ENCODE measurements at regions of chr20 and their contacts with region 1.

Region 1: DNA sequence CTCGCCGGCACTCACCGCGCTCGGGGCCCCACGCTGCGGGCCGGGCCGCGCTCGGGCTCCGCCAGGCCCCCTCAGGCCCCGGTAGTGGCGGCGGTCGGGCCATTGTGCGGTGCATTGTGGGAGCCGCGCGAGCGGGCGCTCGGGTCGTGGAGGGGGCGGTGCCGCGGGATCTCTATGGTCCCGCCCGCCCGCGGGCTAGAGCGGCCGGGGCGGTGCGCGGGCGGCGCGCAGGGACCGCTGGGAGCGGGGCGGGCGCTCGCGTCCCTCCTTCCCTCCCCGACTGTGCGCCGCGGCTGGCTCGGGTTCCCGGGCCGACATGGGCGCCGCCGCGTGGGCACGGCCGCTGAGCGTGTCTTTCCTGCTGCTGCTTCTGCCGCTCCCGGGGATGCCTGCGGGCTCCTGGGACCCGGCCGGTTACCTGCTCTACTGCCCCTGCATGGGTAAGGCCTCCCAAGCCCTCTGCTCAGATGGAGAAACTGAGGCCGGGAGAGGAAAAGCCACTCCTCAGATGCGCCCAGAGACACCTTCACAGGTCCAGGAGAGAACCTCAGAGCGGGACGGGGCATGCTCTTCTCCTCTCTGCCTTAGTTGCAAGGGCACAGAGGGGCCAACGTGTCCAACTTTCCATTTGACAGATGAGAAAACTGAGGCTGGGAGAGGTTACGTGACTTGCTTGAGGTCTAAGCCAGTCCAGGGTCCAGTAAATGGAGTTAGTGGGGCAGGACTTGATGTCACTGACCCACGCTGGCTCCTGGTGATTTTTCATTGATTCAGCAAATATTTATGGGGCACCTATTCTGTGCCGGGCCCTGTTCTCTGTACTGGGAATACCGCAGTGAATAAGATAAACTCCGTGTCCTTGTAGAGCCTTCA is at the starts of genes PLAGL2 and POFUT1:
- DNase-seq: peak; percentile 86
- H3K4me3 Mint-ChIP-seq: peak within 1 kb of the TSS; percentile 100
- H3K27ac Mint-ChIP-seq: peak within 1 kb of the TSS; percentile 100
- H3K4me1 Mint-ChIP-seq: peaks cover 64% of the 10 kb centered on the region
- H3K27me3 Mint-ChIP-seq: no peaks in the 10 kb centered on the region
- CTCF ChIP-seq: no peak
- total RNA-seq, gene PLAGL2: 18.4 and 18.6 TPM in 2 replicates
- total RNA-seq, gene POFUT1: 43.1 and 43.9 TPM in 2 replicates

Region 2: DNA sequence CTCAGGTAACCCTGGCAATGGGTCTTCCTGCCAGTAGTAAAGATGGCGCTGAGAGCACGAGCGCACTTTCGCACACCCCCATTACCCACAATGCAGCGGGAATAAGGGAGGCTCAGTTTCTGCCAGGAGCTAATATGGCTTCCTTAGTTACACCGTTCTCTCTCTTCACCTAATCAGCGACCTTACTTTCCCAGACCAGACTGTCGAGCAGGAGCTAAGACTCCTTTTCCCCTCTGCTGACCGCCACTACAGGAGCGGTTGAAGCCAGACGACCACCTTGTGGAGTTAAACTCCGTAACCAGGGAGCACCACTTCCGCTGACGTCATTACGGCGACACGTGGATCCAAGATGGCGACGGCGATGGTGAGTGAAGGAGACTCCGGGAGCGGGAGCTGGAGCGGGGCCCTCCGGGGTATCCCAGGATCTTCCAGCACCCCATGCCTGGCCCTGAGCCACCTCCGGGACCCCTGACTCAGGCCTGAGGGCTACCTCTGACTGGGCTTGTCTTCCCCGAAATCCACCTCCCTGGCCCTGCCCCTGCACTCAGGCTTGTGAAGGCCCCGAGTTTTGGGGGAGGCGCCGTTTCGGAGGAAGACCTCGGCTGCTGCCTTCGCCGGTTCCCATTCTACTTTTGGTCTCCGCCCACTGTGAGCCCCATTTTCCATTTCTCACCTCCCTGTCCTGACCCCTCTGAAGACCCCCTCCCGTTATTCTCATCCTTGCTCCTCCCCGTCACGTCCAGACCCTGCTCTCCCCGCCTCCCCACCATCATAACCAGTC is 98.3 kb before region 1 on chr20 and contains the start of gene TM9SF4:
- CTCF ChIA-PET with region 1: interaction called, 3 read pairs
- POLR2A ChIA-PET with region 1: interaction called, 23 read pairs
- intact Hi-C with region 1: no loop called
- DNase-seq: peak; percentile 96
- H3K4me3 Mint-ChIP-seq: peak within 1 kb of the TSS; percentile 76
- H3K27ac Mint-ChIP-seq: peak within 1 kb of the TSS; percentile 99
- H3K4me1 Mint-ChIP-seq: peaks cover 28% of the 10 kb centered on the region
- H3K27me3 Mint-ChIP-seq: peaks cover 4% of the 10 kb centered on the region
- CTCF ChIP-seq: no peak
- total RNA-seq, gene TM9SF4: 50.6 and 52.3 TPM in 2 replicates

Region 3: GRCh38 chr20:32155017-32155981 is 52.6 kb before region 1 on chr20:
- CTCF ChIA-PET with region 1: interaction called, 4 read pairs
- POLR2A ChIA-PET with region 1: interaction called, 4 read pairs
- intact Hi-C with region 1: loop called (anchors 2 kb)
- DNase-seq: peak; percentile 95
- H3K4me3 Mint-ChIP-seq: peak overlapping the region; percentile 21
- H3K27ac Mint-ChIP-seq: peak overlapping the region; percentile 62
- H3K4me1 Mint-ChIP-seq: peaks cover 17% of the 10 kb centered on the region
- H3K27me3 Mint-ChIP-seq: no peaks in the 10 kb centered on the region
- CTCF ChIP-seq: no peak

Region 4: GRCh38 chr20:32218156-32218900 is 10.5 kb after region 1 on chr20:
- CTCF ChIA-PET with region 1: no interaction called
- POLR2A ChIA-PET with region 1: interaction called, 13 read pairs
- intact Hi-C with region 1: no loop called
- DNase-seq: no peak
- H3K4me3 Mint-ChIP-seq: no peak overlapping the region
- H3K27ac Mint-ChIP-seq: no peak overlapping the region
- H3K4me1 Mint-ChIP-seq: peaks cover 7% of the 10 kb centered on the region
- H3K27me3 Mint-ChIP-seq: no peaks in the 10 kb centered on the region
- CTCF ChIP-seq: no peak

Region 5: GRCh38 chr20:32357869-32358631 is 150.2 kb after region 1 on chr20 and contains the start of gene ASXL1:
- CTCF ChIA-PET with region 1: no interaction called
- POLR2A ChIA-PET with region 1: interaction called, 17 read pairs
- intact Hi-C with region 1: loop called (anchors 5 kb)
- DNase-seq: peak; percentile 96
- H3K4me3 Mint-ChIP-seq: peak within 1 kb of the TSS; percentile 87
- H3K27ac Mint-ChIP-seq: peak within 1 kb of the TSS; percentile 96
- H3K4me1 Mint-ChIP-seq: peaks cover 38% of the 10 kb centered on the region
- H3K27me3 Mint-ChIP-seq: no peaks in the 10 kb centered on the region
- CTCF ChIP-seq: no peak
- total RNA-seq, gene ASXL1: 58.9 and 69.9 TPM in 2 replicates

Region 6: DNA sequence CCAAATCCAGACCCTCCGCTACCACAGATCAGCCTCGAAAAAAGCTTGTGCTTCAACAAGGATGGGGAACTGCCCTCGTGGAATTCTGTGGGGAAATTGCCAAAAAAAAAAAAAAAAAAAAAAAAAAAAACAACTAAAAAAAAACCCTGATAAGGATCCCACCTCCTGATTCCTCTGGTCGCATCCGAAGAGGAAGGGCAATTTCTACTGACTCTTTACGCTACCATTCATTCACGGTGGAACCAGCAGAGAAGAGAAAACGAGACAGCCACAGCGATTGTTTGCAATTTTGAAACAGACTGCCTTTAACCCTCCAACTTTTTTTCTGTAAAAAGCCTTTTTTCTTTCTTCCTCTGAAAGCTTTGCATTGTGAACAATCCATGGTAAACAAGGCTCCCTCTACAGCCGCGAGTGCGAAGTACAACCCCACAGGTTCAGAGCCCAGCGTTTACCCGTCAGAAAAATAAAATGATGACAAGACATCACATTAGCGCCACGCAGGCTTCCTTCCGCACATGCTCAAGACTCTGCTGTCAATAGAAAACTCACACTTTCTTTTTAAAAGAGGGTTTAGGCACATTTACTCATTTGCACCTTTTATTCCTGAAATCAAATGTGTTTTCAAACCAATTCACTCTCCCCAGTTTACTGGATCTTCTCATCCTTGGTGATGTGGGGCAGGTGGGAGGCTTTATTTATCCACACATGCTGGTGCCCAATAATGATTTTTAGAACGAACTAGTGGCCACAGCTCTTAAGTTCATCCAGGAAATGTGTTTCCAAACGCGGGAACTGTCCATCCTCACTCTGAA is 277.3 kb after region 1 on chr20:
- CTCF ChIA-PET with region 1: no interaction called
- POLR2A ChIA-PET with region 1: no interaction called
- intact Hi-C with region 1: loop called (anchors 2 kb)
- DNase-seq: peak; percentile 79
- H3K4me3 Mint-ChIP-seq: peak overlapping the region; percentile 75
- H3K27ac Mint-ChIP-seq: no peak overlapping the region
- H3K4me1 Mint-ChIP-seq: peaks cover 8% of the 10 kb centered on the region
- H3K27me3 Mint-ChIP-seq: peaks cover 37% of the 10 kb centered on the region
- CTCF ChIP-seq: peak; percentile 87